CD4-positive, alpha-beta T cell (primary cell): ENCODE measurements at regions of chr9 and their contacts with region 1.

Region 1: DNA sequence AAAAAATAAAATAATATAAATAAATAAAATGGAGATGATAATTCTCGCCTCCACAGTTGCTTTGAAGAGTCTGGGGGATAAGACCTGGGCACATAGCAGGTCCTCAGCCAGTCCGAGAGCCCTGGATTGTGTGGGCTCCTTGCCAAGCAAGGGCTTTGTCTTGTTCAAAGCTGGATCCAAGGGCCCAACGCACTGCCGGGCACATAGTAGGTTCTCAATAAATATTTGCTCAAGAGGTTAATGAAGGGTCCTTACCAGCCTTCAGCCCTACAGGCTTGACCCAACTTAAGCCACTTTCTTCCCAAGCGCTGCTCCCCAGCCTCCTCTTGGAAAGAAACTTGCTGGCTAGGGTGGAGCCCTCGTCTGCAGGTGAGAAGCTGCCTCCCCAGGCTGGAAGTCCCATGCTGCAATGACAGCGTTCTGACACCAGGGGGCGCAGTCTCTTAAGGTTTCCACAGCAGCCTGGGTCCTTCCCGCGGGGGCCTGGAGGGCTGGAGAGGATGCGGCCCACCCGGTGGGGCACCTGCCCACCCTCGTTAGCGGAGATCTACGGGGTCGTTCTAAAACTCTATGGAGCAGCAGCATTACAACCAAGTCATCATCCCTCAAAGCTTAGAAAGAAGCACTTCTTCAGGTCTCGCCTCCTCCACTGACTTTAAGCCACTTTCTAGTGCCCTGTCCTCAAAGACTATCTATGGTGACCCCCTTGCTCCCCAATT is 115.2 kb downstream of the LHX2 start:
- DNase-seq: peak; percentile 50 to 82 (median 66)
- ATAC-seq: peak; percentile 48
- H3K4me3 ChIP-seq: no peak overlapping the region
- H3K4me3 Mint-ChIP-seq: no peak overlapping the region
- H3K27ac ChIP-seq: no peak overlapping the region
- H3K27ac Mint-ChIP-seq: no peak overlapping the region
- H3K4me1 ChIP-seq: peaks cover 7% of the 10 kb centered on the region
- H3K4me1 Mint-ChIP-seq: no peaks in the 10 kb centered on the region
- H3K27me3 ChIP-seq: peaks cover 0 to 2% of the 10 kb centered on the region in 2 experiments
- H3K27me3 Mint-ChIP-seq: peaks cover 18% of the 10 kb centered on the region
- CTCF ChIP-seq: peak; percentile 89

Region 2: DNA sequence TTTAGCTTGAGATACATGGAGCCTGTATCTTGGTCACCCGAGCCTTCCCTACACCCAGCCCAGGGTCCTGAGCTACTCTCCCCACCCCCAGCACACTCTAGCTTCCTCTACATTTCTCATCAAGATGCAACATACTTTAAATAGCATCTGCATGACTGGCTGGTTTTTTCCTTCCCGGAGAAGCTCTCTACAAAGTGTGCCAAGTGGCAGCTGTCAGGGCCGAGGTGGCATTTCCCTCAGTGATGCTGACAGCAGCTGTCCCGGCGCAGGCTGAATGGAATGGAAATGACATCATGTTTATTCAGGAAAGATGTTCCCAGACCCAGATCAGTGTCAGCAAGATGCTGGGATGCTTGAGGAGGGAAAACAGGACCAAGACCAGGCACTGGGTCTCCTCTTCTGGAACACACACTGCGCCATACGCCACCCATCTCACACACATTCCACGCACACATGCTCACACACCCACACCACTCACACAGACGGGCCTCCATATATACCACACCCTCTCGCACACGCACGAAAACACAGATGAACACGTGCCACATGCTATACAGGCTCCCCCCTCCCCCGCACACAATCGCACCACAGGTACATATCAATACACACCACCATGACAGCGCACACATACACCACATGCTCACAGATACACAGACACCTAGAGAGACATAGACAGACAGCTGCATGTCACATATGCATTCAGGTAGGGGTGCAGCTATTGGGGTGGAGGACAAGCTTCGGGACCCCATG is 47.4 kb before region 1 on chr9:
- CTCF ChIA-PET with region 1: no interaction called
- POLR2A ChIA-PET with region 1: no interaction called
- intact Hi-C with region 1: no loop called
- DNase-seq: no peak
- ATAC-seq: no peak
- H3K4me3 ChIP-seq: no peak overlapping the region
- H3K4me3 Mint-ChIP-seq: no peak overlapping the region
- H3K27ac ChIP-seq: no peak overlapping the region
- H3K27ac Mint-ChIP-seq: no peak overlapping the region
- H3K4me1 ChIP-seq: no peaks in the 10 kb centered on the region
- H3K4me1 Mint-ChIP-seq: no peaks in the 10 kb centered on the region
- H3K27me3 ChIP-seq: no peaks in the 10 kb centered on the region
- H3K27me3 Mint-ChIP-seq: peaks cover 15% of the 10 kb centered on the region
- CTCF ChIP-seq: no peak

Region 3: DNA sequence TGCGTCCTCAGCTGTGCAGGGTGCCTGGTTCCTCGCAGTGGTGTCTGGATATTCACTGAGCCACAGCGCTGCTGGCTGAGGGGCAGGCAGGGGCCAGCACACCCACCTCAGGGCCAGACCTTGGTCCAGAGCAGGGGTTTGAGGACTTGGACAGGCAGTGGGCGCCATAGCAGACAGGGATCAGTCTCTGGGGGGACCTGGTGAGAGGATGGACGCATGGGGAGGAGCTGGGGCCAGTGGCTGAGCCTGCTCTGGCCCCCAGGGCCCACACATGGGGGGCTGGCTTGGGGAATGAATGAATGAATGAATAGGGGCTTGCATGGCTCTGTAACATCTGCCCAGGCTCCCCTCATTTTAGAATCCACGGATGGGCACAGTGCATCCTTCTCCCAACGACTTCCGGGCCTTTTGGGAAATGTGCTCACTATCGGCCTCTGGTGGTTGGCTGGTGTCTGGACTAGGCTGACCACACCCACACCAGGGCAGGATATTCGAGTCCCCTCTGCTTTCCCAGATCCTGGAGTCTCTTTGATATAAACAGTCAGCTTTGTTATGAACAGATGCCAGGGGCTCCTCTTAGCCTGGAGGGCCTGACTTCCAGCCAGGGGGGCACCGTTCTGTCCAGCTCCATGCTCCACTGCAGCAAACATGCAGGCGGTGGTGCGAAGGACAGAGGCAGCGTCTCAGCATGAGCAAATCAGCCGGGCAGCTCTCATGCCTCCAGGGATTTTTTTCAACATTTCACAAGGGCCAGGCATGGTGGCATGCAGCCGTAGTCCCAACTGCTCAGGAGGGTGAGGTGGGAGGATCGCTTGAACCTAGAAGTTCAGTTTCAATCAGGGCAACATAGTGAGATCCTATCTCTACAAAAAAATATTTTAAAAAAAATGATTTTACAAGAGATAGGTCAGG is 193.6 kb after region 1 on chr9:
- CTCF ChIA-PET with region 1: interaction called, 3 read pairs
- POLR2A ChIA-PET with region 1: no interaction called
- intact Hi-C with region 1: loop called in 1 of 2 experiments (anchors 2 kb)
- DNase-seq: peak in 11 of 14 experiments; percentile 10 to 59 (median 28)
- ATAC-seq: no peak
- H3K4me3 ChIP-seq: no peak overlapping the region
- H3K4me3 Mint-ChIP-seq: no peak overlapping the region
- H3K27ac ChIP-seq: no peak overlapping the region
- H3K27ac Mint-ChIP-seq: no peak overlapping the region
- H3K4me1 ChIP-seq: peaks cover 11% of the 10 kb centered on the region
- H3K4me1 Mint-ChIP-seq: no peaks in the 10 kb centered on the region
- H3K27me3 ChIP-seq: no peaks in the 10 kb centered on the region
- H3K27me3 Mint-ChIP-seq: no peaks in the 10 kb centered on the region
- CTCF ChIP-seq: peak; percentile 51

Region 4: GRCh38 chr9:124392871-124393460 is 266.2 kb after region 1 on chr9:
- CTCF ChIA-PET with region 1: no interaction called
- POLR2A ChIA-PET with region 1: no interaction called
- intact Hi-C with region 1: loop called in 1 of 2 experiments (anchors 5 kb)
- DNase-seq: peak in 2 of 14 experiments; percentile 23 to 43
- ATAC-seq: no peak
- H3K4me3 ChIP-seq: no peak overlapping the region
- H3K4me3 Mint-ChIP-seq: no peak overlapping the region
- H3K27ac ChIP-seq: no peak overlapping the region
- H3K27ac Mint-ChIP-seq: no peak overlapping the region
- H3K4me1 ChIP-seq: peaks cover 6% of the 10 kb centered on the region
- H3K4me1 Mint-ChIP-seq: peaks cover 74% of the 10 kb centered on the region
- H3K27me3 ChIP-seq: no peaks in the 10 kb centered on the region
- H3K27me3 Mint-ChIP-seq: no peaks in the 10 kb centered on the region
- CTCF ChIP-seq: no peak

Region 5: GRCh38 chr9:124532897-124533296 is 406.2 kb after region 1 on chr9:
- CTCF ChIA-PET with region 1: interaction called, 11 read pairs
- POLR2A ChIA-PET with region 1: no interaction called
- intact Hi-C with region 1: loop called in 1 of 2 experiments (anchors 5 kb)
- DNase-seq: no peak
- ATAC-seq: no peak
- H3K4me3 ChIP-seq: no peak overlapping the region
- H3K4me3 Mint-ChIP-seq: no peak overlapping the region
- H3K27ac ChIP-seq: no peak overlapping the region
- H3K27ac Mint-ChIP-seq: no peak overlapping the region
- H3K4me1 ChIP-seq: no peaks in the 10 kb centered on the region
- H3K4me1 Mint-ChIP-seq: no peaks in the 10 kb centered on the region
- H3K27me3 ChIP-seq: no peaks in the 10 kb centered on the region
- H3K27me3 Mint-ChIP-seq: peaks cover 4% of the 10 kb centered on the region
- CTCF ChIP-seq: no peak

Region 6: DNA sequence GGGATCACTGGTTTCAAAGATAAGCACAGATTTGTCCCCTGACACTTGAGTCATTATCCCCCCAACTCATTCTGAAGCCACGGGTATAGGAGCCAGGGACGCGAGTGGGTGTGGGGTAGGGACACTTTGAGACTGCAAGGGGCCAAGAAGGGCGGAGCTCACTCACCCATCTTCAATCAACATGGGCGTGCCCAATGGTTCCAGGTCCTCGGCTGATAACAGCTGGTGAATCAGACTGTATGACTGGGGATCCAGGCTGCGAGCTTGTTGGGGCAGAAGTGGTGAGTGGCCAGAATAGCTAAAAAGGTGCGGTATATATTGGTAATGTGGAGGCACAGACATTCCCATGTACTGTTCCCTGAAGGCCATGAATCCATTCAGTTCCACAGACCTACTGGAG is 411.2 kb after region 1 on chr9:
- CTCF ChIA-PET with region 1: interaction called, 11 read pairs
- POLR2A ChIA-PET with region 1: no interaction called
- intact Hi-C with region 1: loop called in 1 of 2 experiments (anchors 5 kb)
- DNase-seq: no peak
- ATAC-seq: no peak
- H3K4me3 ChIP-seq: no peak overlapping the region
- H3K4me3 Mint-ChIP-seq: no peak overlapping the region
- H3K27ac ChIP-seq: no peak overlapping the region
- H3K27ac Mint-ChIP-seq: no peak overlapping the region
- H3K4me1 ChIP-seq: no peaks in the 10 kb centered on the region
- H3K4me1 Mint-ChIP-seq: no peaks in the 10 kb centered on the region
- H3K27me3 ChIP-seq: no peaks in the 10 kb centered on the region
- H3K27me3 Mint-ChIP-seq: peaks cover 4% of the 10 kb centered on the region
- CTCF ChIP-seq: no peak